ENCODE measurements at regions of chr2 and their contacts with region 1.

Region 1: DNA sequence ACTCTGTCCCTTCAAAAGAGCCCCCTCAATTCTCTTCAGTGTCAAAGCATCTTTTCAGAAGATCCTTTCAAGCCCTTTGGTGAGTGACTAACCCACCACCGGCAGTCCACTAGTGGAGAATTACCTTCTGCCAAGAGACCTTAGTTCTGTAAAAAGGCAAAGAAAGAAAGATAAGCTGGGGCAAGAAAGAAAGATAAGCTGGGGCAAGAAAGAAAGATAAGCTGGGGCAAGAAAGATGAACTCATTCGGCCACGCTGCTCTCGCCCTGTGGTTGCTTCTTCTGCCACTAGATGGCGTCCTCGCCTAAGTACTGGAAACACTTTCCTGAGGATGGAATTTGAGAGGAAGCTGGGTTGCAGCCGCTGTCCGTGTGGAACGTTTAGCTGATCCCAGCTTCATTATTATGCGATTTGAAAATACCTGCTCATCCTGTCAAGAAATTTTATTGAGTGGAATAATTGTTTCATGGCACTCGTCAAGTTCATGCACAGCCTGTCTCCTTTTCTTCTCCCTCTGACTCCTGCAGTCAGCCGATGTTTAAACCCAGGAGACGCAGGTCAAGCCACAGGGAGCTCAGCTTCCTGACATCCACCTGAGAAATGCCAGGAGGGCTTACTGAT is 17.3 kb upstream of the ANXA4 start:
- DNase-seq: peak; percentile 91
- H3K4me3 Mint-ChIP-seq: peak overlapping the region; percentile 48
- H3K27ac Mint-ChIP-seq: no peak overlapping the region
- H3K4me1 Mint-ChIP-seq: peaks cover 4% of the 10 kb centered on the region
- H3K27me3 Mint-ChIP-seq: no peaks in the 10 kb centered on the region

Region 2: GRCh38 chr2:69741619-69742466 is 17.2 kb after region 1 on chr2 and contains the start of gene ANXA4:
- CTCF ChIA-PET with region 1: interaction called, 66 read pairs
- POLR2A ChIA-PET with region 1: no interaction called
- intact Hi-C with region 1: no loop called
- DNase-seq: peak; percentile 76
- H3K4me3 Mint-ChIP-seq: peak within 1 kb of the TSS; percentile 81
- H3K27ac Mint-ChIP-seq: peak within 1 kb of the TSS; percentile 82
- H3K4me1 Mint-ChIP-seq: peaks cover 11% of the 10 kb centered on the region
- H3K27me3 Mint-ChIP-seq: no peaks in the 10 kb centered on the region
- total RNA-seq, gene ANXA4: 41.3 to 43.2 TPM

Region 3: GRCh38 chr2:69798909-69799526 is 74.4 kb after region 1 on chr2:
- CTCF ChIA-PET with region 1: interaction called, 17 read pairs
- POLR2A ChIA-PET with region 1: no interaction called
- intact Hi-C with region 1: no loop called
- DNase-seq: no peak
- H3K4me3 Mint-ChIP-seq: no peak overlapping the region
- H3K27ac Mint-ChIP-seq: no peak overlapping the region
- H3K4me1 Mint-ChIP-seq: peaks cover 7% of the 10 kb centered on the region
- H3K27me3 Mint-ChIP-seq: no peaks in the 10 kb centered on the region

Region 4: GRCh38 chr2:69829256-69830046 is 104.8 kb after region 1 on chr2 and contains the start of gene GMCL1:
- CTCF ChIA-PET with region 1: interaction called, 17 read pairs
- POLR2A ChIA-PET with region 1: no interaction called
- intact Hi-C with region 1: no loop called
- DNase-seq: peak; percentile 99
- H3K4me3 Mint-ChIP-seq: peak within 1 kb of the TSS; percentile 81
- H3K27ac Mint-ChIP-seq: peak within 1 kb of the TSS; percentile 92
- H3K4me1 Mint-ChIP-seq: peaks cover 40% of the 10 kb centered on the region
- H3K27me3 Mint-ChIP-seq: no peaks in the 10 kb centered on the region
- total RNA-seq, gene GMCL1: 20.6 to 22.1 TPM

Region 5: DNA sequence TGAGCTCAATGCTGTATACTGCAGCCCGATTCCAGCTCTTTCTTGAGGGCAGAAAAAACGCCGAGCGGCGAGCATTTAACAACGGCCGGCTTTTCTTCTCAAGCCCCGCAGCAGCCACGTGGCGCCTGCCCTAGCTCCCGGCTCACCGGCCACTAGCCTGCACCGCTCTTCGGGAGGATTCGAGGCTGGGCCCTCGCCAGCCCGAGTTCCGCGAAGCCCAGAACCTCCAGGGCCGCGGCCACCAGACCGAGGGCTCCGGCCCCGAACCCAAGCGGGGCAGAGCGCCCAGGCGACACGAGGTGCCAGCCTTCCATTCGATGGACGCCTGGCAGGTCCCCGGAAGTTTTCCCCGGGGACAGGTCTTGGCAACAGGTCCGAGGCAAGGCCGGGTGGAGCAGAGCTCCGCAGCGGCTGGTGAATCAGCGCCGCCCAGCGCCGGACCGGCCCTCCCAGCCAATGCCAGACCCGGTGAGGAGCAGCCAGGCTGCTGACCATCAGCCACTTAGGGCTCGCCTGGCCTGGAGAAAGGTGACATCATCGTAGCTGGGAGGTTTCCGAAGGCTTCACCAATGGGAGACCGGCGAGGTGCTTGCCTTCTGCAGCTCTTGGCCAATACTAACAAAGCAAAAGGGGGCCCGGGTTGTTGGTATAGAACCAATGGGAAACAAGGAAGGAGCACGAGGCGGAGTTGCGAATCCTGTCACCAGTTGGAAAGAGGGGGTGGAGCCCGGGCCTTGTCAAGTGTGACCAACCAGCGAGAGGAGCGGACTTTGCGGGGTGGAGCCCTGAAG is 189.7 kb after region 1 on chr2:
- CTCF ChIA-PET with region 1: interaction called, 12 read pairs
- POLR2A ChIA-PET with region 1: no interaction called
- intact Hi-C with region 1: no loop called
- DNase-seq: peak; percentile 100
- H3K4me3 Mint-ChIP-seq: peak overlapping the region; percentile 82
- H3K27ac Mint-ChIP-seq: peak overlapping the region; percentile 89
- H3K4me1 Mint-ChIP-seq: peaks cover 40% of the 10 kb centered on the region
- H3K27me3 Mint-ChIP-seq: no peaks in the 10 kb centered on the region

Measured in activated CD4-positive, alpha-beta memory T cell treated with anti-CD3 and anti-CD28 coated beads for 36 hours (primary cell).